Activated T-helper 1 cell treated with anti-CD3 and anti-CD28 coated beads, Interleukin-12 subunit alpha, Interleukin-12 subunit beta, Interleukin-2, Interleukin-4 antibody, amounts not matched to agents 30 ng/mL and 10 ng/mL and 1 ng/mL, durations not matched to agents 14 hours and 24 hours and 36 hours (primary cell): ENCODE measurements at regions of chr4 and their contacts with region 1.

Region 1: GRCh38 chr4:153573881-153574802 is 108.0 kb downstream of the TMEM131L start:
- DNase-seq: peak; percentile 28
- H3K4me3 Mint-ChIP-seq: no peak overlapping the region
- H3K27ac Mint-ChIP-seq: peak overlapping the region; percentile 41
- H3K4me1 Mint-ChIP-seq: peaks cover 58% of the 10 kb centered on the region
- H3K27me3 Mint-ChIP-seq: no peaks in the 10 kb centered on the region

Region 2: GRCh38 chr4:152850377-152850776 is 723.8 kb before region 1 on chr4:
- intact Hi-C with region 1: loop called (anchors 1 kb)
- DNase-seq: no peak
- H3K4me3 Mint-ChIP-seq: no peak overlapping the region
- H3K27ac Mint-ChIP-seq: no peak overlapping the region
- H3K4me1 Mint-ChIP-seq: peaks cover 23% of the 10 kb centered on the region
- H3K27me3 Mint-ChIP-seq: no peaks in the 10 kb centered on the region

Region 3: DNA sequence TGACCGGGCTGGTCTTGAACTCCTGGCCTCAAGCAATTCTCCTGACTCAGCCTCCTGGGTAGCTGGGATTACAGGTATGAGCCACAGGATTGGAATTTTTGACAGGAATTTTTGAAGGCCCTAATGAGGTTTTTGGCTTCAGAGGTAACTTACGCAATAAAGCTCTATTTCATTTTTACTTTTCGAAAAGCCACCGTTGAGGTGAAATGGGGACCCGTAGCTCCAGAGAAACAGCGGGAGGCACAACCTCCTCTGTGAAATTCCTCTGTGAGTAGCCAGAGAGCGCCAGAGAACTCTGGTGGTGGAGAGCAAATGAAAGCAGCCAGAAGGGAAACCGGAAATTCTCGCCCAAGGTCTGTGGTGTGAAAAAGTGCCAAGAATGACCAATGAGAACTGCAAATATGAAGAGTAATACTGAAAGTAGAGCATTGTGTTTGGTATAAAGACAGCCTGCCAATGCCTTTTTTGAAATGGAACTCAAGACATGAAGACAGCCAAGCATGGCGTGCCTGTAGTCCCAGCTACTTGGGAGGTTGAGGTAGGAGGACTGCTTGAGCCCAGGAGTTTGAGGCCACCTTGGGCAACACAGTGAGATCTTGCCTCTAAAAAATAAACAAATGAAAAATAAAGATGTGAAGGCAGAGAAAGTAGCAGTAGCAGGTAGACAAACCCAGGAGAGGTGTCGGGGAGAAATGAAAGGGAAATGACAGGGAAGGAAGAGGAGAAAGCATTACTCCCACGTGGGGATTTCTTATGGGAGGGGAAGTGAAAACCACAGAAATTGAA is 141.0 kb before region 1 on chr4:
- intact Hi-C with region 1: loop called (anchors 1 kb)
- DNase-seq: peak; percentile 68
- H3K4me3 Mint-ChIP-seq: peak overlapping the region; percentile 76
- H3K27ac Mint-ChIP-seq: peak overlapping the region; percentile 87
- H3K4me1 Mint-ChIP-seq: peaks cover 46% of the 10 kb centered on the region
- H3K27me3 Mint-ChIP-seq: peaks cover 4% of the 10 kb centered on the region

Region 4: DNA sequence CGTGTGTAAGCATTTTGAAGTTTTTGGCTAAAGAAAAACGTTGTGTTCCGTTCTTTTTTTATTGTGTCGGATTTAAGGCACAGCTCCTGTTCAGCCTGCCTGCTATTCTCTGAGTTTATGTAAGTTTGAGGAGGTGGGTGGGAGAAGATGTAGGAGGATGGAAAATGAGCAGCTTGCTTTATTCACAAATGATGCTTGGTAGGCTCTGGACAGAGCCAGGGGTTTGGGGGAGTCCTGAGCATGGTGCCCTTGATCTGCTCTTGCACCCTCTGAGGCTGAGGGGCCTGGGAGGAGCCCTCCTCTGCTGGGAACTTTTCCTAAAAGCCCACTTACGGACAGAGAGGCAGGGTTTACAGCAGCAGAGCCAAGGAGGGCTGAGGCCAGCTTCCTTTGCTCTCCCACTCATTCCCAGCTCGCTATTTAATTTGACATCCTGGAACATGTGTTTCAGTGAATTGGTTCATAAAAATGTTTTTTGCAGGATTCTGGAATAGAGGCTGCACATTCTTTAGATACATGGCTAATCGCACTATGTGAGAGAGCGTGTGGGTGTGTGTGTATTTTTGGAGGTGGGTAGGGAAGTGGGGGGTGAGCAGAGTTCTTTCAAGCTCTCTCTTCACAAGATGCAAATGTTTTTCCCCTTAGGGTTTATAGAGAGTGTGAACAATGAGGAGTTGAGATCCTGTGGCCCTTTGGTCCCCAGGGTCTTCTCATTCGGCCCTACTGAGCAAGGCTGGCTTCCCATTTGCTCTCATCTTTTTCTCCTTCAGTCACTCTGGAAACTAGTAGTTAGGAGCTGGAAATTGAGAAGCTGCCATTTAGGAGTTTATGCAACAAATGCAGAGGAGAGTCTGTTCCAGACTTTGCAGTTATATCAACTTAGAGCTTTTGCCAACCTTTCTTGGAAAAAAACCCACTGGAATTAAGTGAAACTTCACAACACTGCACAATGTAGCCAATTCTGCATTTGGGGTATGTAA is 75.9 kb before region 1 on chr4:
- intact Hi-C with region 1: loop called (anchors 1 kb)
- DNase-seq: no peak
- H3K4me3 Mint-ChIP-seq: peak overlapping the region; percentile 79
- H3K27ac Mint-ChIP-seq: peak overlapping the region; percentile 90
- H3K4me1 Mint-ChIP-seq: peaks cover 89% of the 10 kb centered on the region
- H3K27me3 Mint-ChIP-seq: no peaks in the 10 kb centered on the region

Region 5: GRCh38 chr4:153528705-153529485 is 45.2 kb before region 1 on chr4:
- intact Hi-C with region 1: loop called (anchors 1 kb)
- DNase-seq: no peak
- H3K4me3 Mint-ChIP-seq: peak overlapping the region; percentile 71
- H3K27ac Mint-ChIP-seq: peak overlapping the region; percentile 93
- H3K4me1 Mint-ChIP-seq: peaks cover 66% of the 10 kb centered on the region
- H3K27me3 Mint-ChIP-seq: no peaks in the 10 kb centered on the region

Region 6: DNA sequence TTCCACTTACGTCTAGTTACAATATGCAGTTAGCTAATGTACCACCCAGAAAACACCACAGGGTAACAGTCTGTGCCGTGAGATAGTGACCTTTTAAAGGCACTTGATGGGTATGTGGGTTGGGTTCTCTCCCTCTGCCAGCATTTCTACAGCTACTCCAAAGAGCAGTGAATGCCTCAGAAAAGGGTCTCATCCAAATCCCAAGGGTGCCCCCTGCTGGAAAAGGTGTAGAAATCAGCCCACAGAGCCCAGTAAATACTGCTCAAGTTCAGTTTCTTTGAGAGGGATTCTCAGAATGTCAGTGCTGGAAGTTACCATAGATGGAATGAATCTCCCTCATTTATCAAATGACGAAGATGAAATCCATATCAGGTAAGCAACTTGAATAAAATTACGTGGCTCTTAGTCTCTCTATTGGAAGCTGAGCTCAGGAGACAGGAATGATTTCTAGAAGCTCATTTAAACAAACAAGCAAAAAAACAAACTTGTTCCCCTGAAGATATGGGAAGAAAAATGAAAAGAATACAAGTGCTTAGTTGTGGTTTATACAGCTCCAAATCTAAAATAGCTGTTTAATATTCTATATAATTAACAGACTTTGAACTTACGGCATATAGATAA is 176.2 kb after region 1 on chr4:
- intact Hi-C with region 1: loop called (anchors 1 kb)
- DNase-seq: peak; percentile 52
- H3K4me3 Mint-ChIP-seq: no peak overlapping the region
- H3K27ac Mint-ChIP-seq: no peak overlapping the region
- H3K4me1 Mint-ChIP-seq: no peaks in the 10 kb centered on the region
- H3K27me3 Mint-ChIP-seq: peaks cover 31% of the 10 kb centered on the region